Prostate gland (tissue), 2 donors: ENCODE measurements at regions of chr1 and their contacts with region 1.

Region 1: GRCh38 chr1:112715264-112716053 is at the start of gene PPM1J:
- DNase-seq: peak; percentile 96
- H3K4me3 ChIP-seq: peak within 1 kb of the TSS; percentile 52 to 65
- H3K27ac ChIP-seq: peak within 1 kb of the TSS; percentile 67 to 75
- H3K4me1 ChIP-seq: peaks cover 4% of the 10 kb centered on the region
- H3K27me3 ChIP-seq: no peaks in the 10 kb centered on the region
- CTCF ChIP-seq: peak in 1 of 4 experiments; percentile 20
- POLR2A ChIP-seq: peak; percentile 73
- total RNA-seq, gene PPM1J: 2.0 to 16.8 TPM

Region 2: DNA sequence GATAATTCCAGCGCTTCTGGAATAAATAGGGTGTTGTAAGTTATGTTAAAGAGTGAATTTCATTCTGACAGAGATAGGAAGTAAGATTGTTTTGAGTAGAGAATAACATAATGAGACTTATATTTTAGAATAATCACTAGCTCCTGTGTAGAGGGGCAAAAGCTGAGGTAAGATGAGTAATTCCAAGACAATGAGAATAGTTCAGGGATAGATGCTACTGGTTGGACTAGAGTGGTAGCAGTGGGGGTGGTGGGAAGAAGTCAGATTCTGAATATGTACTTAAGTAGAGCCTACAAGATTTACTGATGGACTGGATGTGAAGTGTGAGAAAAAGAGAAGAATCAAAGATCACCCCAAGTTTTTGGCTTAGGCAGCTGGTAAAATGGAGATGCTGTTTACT is 64.3 kb before region 1 on chr1:
- intact Hi-C with region 1: no loop called
- DNase-seq: no peak
- H3K4me3 ChIP-seq: no peak overlapping the region
- H3K27ac ChIP-seq: no peak overlapping the region
- H3K4me1 ChIP-seq: no peaks in the 10 kb centered on the region
- H3K27me3 ChIP-seq: no peaks in the 10 kb centered on the region
- CTCF ChIP-seq: no peak
- POLR2A ChIP-seq: no peak

Region 3: GRCh38 chr1:112803906-112804762 is 88.7 kb after region 1 on chr1:
- intact Hi-C with region 1: loop called (anchors 1 kb)
- DNase-seq: peak; percentile 72
- H3K4me3 ChIP-seq: no peak overlapping the region
- H3K27ac ChIP-seq: no peak overlapping the region
- H3K4me1 ChIP-seq: no peaks in the 10 kb centered on the region
- H3K27me3 ChIP-seq: no peaks in the 10 kb centered on the region
- CTCF ChIP-seq: peak; percentile 49 to 90 (median 79)
- POLR2A ChIP-seq: no peak

Region 4: GRCh38 chr1:112955781-112956543 is 240.5 kb after region 1 on chr1 and contains the start of gene SLC16A1:
- intact Hi-C with region 1: loop called (anchors 5 kb)
- DNase-seq: peak; percentile 91
- H3K4me3 ChIP-seq: peak within 1 kb of the TSS; percentile 56 to 80
- H3K27ac ChIP-seq: peak within 1 kb of the TSS; percentile 80 to 85
- H3K4me1 ChIP-seq: peaks cover 3% of the 10 kb centered on the region
- H3K27me3 ChIP-seq: no peaks in the 10 kb centered on the region
- CTCF ChIP-seq: peak; percentile 10 to 34 (median 23)
- POLR2A ChIP-seq: peak; percentile 82
- total RNA-seq, gene SLC16A1: 14.6 to 110 TPM

Region 5: DNA sequence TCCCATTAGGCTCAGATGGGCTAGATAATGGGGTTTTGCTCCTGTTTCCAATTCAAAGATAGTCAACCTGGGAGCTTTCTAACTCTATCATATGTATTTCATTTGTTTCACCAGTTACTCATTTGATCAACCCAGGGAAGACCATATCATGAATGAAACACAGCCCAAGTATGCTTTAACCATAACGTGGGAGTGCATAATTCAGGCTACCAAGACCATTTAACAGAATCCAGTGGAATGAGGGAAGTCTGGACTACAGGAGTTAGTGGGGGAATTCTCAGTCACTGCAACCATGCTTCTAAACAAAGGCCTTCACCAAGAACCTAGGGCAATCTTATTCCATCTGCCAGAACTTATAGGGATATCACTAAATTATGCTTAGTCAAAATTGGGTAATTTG is 255.5 kb after region 1 on chr1:
- intact Hi-C with region 1: no loop called
- DNase-seq: no peak
- H3K4me3 ChIP-seq: no peak overlapping the region
- H3K27ac ChIP-seq: no peak overlapping the region
- H3K4me1 ChIP-seq: no peaks in the 10 kb centered on the region
- H3K27me3 ChIP-seq: no peaks in the 10 kb centered on the region
- CTCF ChIP-seq: no peak
- POLR2A ChIP-seq: no peak

Region 6: DNA sequence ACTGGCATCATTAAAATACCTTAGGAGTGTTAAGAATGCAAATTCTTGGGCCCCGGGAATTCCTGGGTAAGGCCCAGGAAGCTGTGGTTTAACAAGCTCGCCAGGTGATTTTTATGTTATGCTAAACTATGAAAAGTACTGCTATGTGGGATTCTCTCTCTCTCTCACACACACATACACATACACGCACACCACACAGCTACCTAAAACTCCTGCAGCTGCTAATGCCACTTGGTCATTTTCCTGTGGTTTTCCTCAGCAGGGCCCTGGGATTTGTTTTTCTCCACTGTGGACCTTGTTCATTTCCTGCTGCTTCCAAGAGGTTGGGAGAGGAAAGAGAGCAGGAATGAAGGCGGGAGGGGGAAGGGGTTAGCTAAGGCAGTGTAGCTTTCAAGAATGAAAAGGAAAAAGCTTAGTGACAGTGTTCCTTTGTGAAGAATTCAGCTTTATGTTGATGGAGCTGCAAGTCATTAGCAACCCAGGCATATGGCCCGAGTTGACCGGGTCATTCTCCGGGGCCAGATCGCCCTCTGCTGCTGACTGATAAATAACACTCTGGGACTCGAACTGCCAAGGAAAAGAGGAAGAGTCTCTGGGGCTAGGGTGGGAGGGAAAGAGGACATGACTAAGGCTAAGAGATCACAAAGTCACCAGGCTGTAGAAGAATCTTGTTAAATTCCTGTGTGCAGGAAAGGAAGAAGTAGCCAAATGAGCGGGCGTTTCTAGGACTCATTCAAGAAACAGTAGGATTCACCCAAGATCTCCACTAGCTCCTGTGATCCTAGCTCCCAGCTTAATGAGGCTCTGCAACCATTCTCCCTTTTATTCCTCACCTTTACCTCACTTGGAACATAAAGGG is 327.1 kb after region 1 on chr1:
- intact Hi-C with region 1: loop called (anchors 1 kb)
- DNase-seq: peak; percentile 69
- H3K4me3 ChIP-seq: no peak overlapping the region
- H3K27ac ChIP-seq: no peak overlapping the region
- H3K4me1 ChIP-seq: no peaks in the 10 kb centered on the region
- H3K27me3 ChIP-seq: no peaks in the 10 kb centered on the region
- CTCF ChIP-seq: peak in 3 of 4 experiments; percentile 55 to 65 (median 61)
- POLR2A ChIP-seq: no peak

Region 7: DNA sequence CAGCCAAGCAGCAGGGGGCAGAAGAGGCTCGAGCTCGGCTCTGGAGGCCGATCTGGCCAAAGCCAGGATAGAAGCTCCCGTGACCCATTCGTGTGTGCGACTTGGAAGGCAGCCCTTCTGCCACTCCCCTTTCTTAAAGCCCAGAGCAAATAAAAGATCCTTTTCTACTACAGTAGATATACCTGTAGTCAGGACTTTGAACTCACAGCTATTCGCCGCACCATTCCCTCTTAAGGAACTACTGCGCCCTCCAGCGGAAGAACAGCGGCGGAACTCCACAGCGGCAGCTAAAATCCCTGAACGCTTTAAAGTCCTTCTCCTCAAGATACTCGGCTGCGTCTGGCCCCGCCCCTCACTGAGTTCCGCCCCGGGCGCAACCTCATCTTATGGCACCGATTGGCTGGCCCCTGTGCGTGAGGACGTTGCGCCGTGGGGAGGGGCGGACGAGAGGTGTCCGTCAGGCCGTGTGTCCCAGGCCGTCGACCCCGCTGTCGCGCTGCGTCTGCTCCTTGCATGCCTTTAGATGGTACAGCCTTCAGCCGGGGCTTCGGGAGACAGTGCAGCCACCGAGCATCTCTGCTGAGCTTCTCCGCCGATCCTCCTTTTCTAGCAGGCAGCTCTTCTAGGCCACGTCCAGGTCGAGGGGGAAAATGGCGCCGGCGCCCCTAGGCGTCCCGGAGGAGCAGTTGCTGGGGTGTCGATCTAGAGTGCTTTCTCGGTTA is 357.5 kb after region 1 on chr1 and contains the start of gene LRIG2:
- intact Hi-C with region 1: loop called (anchors 10 kb)
- DNase-seq: peak; percentile 99
- H3K4me3 ChIP-seq: peak within 1 kb of the TSS; percentile 72 to 88
- H3K27ac ChIP-seq: peak within 1 kb of the TSS; percentile 85 to 93
- H3K4me1 ChIP-seq: peaks cover 3% of the 10 kb centered on the region
- H3K27me3 ChIP-seq: no peaks in the 10 kb centered on the region
- CTCF ChIP-seq: peak; percentile 66 to 94 (median 90)
- POLR2A ChIP-seq: peak; percentile 90
- total RNA-seq, gene LRIG2: 20.8 to 26.6 TPM

Region 8: DNA sequence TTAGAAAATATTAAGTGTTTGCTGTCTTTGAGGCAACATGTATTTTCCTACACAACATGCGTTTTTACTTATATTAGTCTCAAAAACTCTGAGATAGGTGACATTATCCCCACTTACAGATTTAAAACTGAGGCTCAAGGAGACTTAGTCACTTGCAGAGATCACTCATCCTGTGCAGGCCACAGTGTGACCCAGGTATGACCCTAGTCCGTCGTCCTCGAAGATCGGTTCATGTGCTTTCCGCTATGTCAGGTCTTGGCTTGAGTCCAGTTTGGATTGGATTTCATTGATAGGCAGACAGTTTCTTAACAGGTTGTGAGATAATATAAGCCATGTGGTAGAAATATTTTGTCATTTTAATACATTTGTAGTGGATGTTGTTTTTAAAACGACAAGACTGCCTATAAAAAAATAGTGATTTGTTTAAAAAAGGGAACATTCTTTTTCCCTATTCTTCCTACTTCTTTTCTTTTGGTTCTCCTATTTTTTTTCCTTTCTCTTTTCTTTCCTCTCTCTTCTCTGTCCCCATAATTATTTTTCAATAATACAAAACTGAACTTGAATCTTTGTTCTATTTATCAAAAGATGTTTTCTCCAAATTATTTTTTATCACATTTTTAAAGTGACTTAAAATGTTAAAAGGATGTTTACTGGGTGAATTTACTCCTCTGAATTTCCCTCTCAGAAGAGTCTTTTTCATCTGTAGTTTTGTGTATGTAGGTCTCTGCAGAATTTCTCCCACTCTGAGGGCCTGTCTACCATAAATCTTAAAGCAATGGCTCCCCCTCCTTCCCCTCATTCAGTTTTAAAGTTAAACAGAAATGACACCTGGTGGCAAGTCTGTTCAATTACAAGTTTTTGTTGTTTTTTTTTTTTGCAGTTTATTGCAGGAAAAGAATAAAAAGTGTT is 962.0 kb after region 1 on chr1:
- intact Hi-C with region 1: loop called (anchors 5 kb)
- DNase-seq: no peak
- H3K4me3 ChIP-seq: no peak overlapping the region
- H3K27ac ChIP-seq: no peak overlapping the region
- H3K4me1 ChIP-seq: no peaks in the 10 kb centered on the region
- H3K27me3 ChIP-seq: no peaks in the 10 kb centered on the region
- CTCF ChIP-seq: peak in 3 of 4 experiments; percentile 47 to 67 (median 60)
- POLR2A ChIP-seq: no peak